ENCODE measurements at regions of chr2 and their contacts with region 1.

Region 1: DNA sequence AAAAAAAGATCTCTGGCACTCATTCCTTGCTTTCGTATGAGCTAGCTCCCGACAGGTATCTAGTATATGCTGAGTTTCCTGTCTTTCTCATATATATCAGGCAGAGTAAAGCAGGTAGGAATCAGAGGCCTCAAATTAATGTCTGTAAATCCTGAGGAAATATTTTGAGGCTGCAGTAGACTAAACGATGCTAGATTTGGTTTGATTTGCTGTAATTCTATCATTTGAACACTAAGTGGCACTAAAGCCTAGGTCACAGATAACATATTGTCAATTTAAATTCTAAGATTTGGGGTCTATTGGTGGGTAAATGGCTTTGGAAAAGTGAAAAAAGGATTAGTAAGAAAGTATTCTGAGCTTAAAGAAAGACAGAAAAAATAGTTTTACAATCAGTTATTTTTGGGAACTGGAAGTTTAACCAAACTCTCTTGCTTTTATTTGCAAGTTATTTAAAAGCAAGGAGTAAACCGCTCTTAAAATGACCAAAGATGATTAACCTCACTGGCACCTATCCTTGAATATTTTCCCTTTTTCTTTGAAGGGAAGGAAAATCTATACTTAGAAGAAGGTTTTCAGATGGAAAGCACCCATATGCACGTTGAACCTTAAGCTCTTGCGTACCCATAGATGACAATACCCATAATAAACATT is 37.6 kb upstream of the SLC4A10 start:
- DNase-seq: no peak
- ATAC-seq: peak; percentile 47
- H3K4me3 Mint-ChIP-seq: no peak overlapping the region
- H3K27ac Mint-ChIP-seq: no peak overlapping the region
- H3K4me1 Mint-ChIP-seq: no peaks in the 10 kb centered on the region
- H3K27me3 Mint-ChIP-seq: no peaks in the 10 kb centered on the region
- CTCF ChIP-seq: peak; percentile 91

Region 2: DNA sequence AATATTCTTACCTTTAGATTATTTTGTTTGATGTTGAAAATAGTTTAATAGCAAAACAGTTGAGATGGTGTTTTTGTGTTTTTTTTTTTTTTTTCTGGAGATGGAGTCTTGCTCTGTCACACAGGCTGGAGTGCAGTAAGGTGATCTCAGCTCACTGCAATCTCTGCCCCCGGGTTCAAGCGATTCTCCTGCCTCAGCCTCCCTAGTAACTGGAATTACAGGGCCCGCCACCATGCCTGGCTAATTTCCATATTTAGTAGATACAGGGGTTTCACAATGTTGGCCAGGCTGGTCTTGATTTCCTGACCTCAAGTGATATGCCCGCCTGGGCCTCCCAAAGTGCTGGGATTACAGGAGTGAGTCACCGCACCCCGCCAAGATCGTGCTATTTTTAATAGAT is 40.8 kb before region 1 on chr2:
- CTCF ChIA-PET with region 1: no interaction called
- POLR2A ChIA-PET with region 1: no interaction called
- intact Hi-C with region 1: no loop called
- DNase-seq: no peak
- ATAC-seq: no peak
- H3K4me3 Mint-ChIP-seq: no peak overlapping the region
- H3K27ac Mint-ChIP-seq: no peak overlapping the region
- H3K4me1 Mint-ChIP-seq: no peaks in the 10 kb centered on the region
- H3K27me3 Mint-ChIP-seq: no peaks in the 10 kb centered on the region
- CTCF ChIP-seq: no peak

Region 3: GRCh38 chr2:161570424-161571050 is 16.1 kb before region 1 on chr2:
- CTCF ChIA-PET with region 1: interaction called, 10 read pairs
- POLR2A ChIA-PET with region 1: no interaction called
- intact Hi-C with region 1: no loop called
- DNase-seq: peak; percentile 13
- ATAC-seq: peak; percentile 48
- H3K4me3 Mint-ChIP-seq: no peak overlapping the region
- H3K27ac Mint-ChIP-seq: peak overlapping the region; percentile 40
- H3K4me1 Mint-ChIP-seq: peaks cover 21% of the 10 kb centered on the region
- H3K27me3 Mint-ChIP-seq: peaks cover 7% of the 10 kb centered on the region
- CTCF ChIP-seq: no peak

Region 4: DNA sequence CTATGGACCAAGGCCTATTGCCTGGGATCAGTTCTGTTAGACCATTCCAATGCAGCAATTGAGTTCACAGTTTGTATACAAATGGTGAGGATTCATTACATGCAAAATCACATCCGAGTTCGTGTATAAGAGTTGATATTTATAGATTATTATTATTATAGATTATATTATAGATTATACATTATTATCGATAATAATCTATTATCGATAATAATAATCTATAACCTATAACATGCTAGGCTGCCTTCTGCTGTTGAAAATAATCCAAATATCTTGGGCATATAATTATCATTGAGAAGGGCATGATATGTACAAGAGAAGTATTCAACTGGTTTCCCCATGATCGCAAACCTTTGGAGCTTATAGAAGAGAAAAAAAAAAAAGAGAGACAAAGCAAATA is 351.7 kb after region 1 on chr2:
- CTCF ChIA-PET with region 1: interaction called, 30 read pairs
- POLR2A ChIA-PET with region 1: no interaction called
- intact Hi-C with region 1: no loop called
- DNase-seq: no peak
- ATAC-seq: no peak
- H3K4me3 Mint-ChIP-seq: no peak overlapping the region
- H3K27ac Mint-ChIP-seq: no peak overlapping the region
- H3K4me1 Mint-ChIP-seq: no peaks in the 10 kb centered on the region
- H3K27me3 Mint-ChIP-seq: peaks cover 8% of the 10 kb centered on the region
- CTCF ChIP-seq: no peak

Region 5: GRCh38 chr2:161946489-161947107 is 360.0 kb after region 1 on chr2:
- CTCF ChIA-PET with region 1: interaction called, 51 read pairs
- POLR2A ChIA-PET with region 1: no interaction called
- intact Hi-C with region 1: loop called (anchors 2 kb)
- DNase-seq: peak; percentile 17
- ATAC-seq: peak; percentile 64
- H3K4me3 Mint-ChIP-seq: no peak overlapping the region
- H3K27ac Mint-ChIP-seq: no peak overlapping the region
- H3K4me1 Mint-ChIP-seq: peaks cover 22% of the 10 kb centered on the region
- H3K27me3 Mint-ChIP-seq: no peaks in the 10 kb centered on the region
- CTCF ChIP-seq: peak; percentile 93

Region 6: GRCh38 chr2:162123806-162124758 is 537.4 kb after region 1 on chr2:
- CTCF ChIA-PET with region 1: interaction called, 39 read pairs
- POLR2A ChIA-PET with region 1: no interaction called
- intact Hi-C with region 1: loop called (anchors 2 kb)
- DNase-seq: no peak
- ATAC-seq: peak; percentile 65
- H3K4me3 Mint-ChIP-seq: no peak overlapping the region
- H3K27ac Mint-ChIP-seq: no peak overlapping the region
- H3K4me1 Mint-ChIP-seq: peaks cover 6% of the 10 kb centered on the region
- H3K27me3 Mint-ChIP-seq: no peaks in the 10 kb centered on the region
- CTCF ChIP-seq: peak; percentile 81

Measured in activated CD8-positive, alpha-beta T cell treated with anti-CD3 and anti-CD28 coated beads for 36 hours (primary cell).